ENCODE measurements at regions of chr6 and their contacts with region 1.

Region 1: GRCh38 chr6:27479319-27480182 is 6.6 kb upstream of the ZNF184 start:
- DNase-seq: peak; percentile 87 to 93 (median 92)
- H3K4me3 ChIP-seq: peak overlapping the region; percentile 88 to 93
- H3K4me3 Mint-ChIP-seq: no peak overlapping the region
- H3K27ac ChIP-seq: peak overlapping the region; percentile 85
- H3K27ac Mint-ChIP-seq: no peak overlapping the region
- H3K4me1 ChIP-seq: peaks cover 17% of the 10 kb centered on the region
- H3K4me1 Mint-ChIP-seq: peaks cover 0 to 11% (median 5%) of the 10 kb centered on the region in 4 donors
- H3K27me3 ChIP-seq: no peaks in the 10 kb centered on the region
- H3K27me3 Mint-ChIP-seq: no peaks in the 10 kb centered on the region

Region 2: DNA sequence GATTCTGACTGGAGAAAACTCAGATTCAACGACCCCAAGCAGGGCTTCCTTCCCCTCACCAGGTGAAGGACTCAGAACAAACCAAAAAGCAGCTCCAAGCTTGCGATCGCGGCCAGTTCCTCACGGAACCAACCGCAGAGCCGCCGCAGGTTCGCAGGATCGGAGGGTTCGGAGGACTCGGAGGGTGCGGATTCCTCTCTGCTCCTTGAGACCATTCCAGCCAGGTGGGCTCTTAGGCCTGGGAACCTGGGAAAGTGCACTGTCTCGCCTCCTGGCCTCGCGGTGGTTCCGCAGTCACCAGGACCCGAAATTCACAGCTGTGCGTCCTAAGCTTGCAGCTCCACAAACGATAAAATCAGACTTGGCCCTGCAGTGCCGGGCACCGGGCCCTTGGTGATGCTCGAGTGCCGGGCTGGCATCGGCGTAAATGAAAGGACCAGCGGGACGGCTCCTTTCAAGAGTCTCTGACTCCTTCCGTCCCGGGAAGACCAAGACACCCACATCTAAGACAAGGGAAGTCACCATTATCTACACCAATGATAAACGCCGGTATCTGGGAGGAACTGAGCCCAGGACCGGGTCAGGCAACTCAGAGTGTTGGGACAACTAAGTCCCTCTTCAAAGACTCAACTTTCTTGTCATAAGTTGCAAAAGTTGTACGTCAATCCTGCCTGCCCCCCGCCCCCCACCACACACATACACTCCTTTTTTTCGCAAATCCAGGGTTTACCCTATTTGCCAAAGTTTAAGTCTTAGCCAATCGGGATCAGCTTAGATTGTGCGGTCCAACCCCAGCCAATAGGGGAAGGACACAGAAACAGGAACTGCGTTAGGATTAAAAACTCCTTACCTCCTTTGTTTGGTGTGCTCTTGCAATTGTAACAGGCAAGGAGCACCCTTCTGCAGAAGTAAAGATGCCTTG is 301.8 kb before region 1 on chr6:
- CTCF ChIA-PET with region 1: no interaction called
- POLR2A ChIA-PET with region 1: interaction called, 24 read pairs
- intact Hi-C with region 1: loop called (anchors 1 kb)
- DNase-seq: peak; percentile 68 to 80 (median 70)
- H3K4me3 ChIP-seq: peak overlapping the region; percentile 98
- H3K4me3 Mint-ChIP-seq: peak overlapping the region; percentile 95 to 99 (median 98)
- H3K27ac ChIP-seq: peak overlapping the region; percentile 77
- H3K27ac Mint-ChIP-seq: peak overlapping the region; percentile 86 to 100 (median 93)
- H3K4me1 ChIP-seq: peaks cover 7% of the 10 kb centered on the region
- H3K4me1 Mint-ChIP-seq: peaks cover 5 to 29% (median 13%) of the 10 kb centered on the region in 4 donors
- H3K27me3 ChIP-seq: no peaks in the 10 kb centered on the region
- H3K27me3 Mint-ChIP-seq: peaks cover 3 to 4% of the 10 kb centered on the region in 2 donors

Region 3: GRCh38 chr6:27388293-27389197 is 91.0 kb before region 1 on chr6 and contains the start of gene ZNF391:
- CTCF ChIA-PET with region 1: interaction called, 3 read pairs
- POLR2A ChIA-PET with region 1: interaction called, 18 read pairs
- intact Hi-C with region 1: loop called (anchors 2 kb)
- DNase-seq: peak; percentile 50 to 71 (median 62)
- H3K4me3 ChIP-seq: peak within 1 kb of the TSS; percentile 62 to 95
- H3K4me3 Mint-ChIP-seq: peak within 1 kb of the TSS; percentile 94 to 99 (median 97)
- H3K27ac ChIP-seq: peak within 1 kb of the TSS; percentile 43
- H3K27ac Mint-ChIP-seq: peak within 1 kb of the TSS; percentile 74 to 95 (median 91)
- H3K4me1 ChIP-seq: peaks cover 14% of the 10 kb centered on the region
- H3K4me1 Mint-ChIP-seq: peaks cover 7 to 23% (median 16%) of the 10 kb centered on the region in 4 donors
- H3K27me3 ChIP-seq: no peaks in the 10 kb centered on the region
- H3K27me3 Mint-ChIP-seq: peaks cover 0 to 1% of the 10 kb centered on the region in 2 donors
- total RNA-seq, gene ZNF391: 3.3 to 3.7 TPM

Region 4: GRCh38 chr6:27518881-27519795 is 39.6 kb after region 1 on chr6:
- CTCF ChIA-PET with region 1: interaction called, 16 read pairs
- POLR2A ChIA-PET with region 1: interaction called, 19 read pairs
- intact Hi-C with region 1: loop called (anchors 1 kb)
- DNase-seq: peak; percentile 63 to 72 (median 68)
- H3K4me3 ChIP-seq: peak overlapping the region; percentile 66 to 76
- H3K4me3 Mint-ChIP-seq: peak overlapping the region; percentile 87 to 93 (median 89)
- H3K27ac ChIP-seq: peak overlapping the region; percentile 64
- H3K27ac Mint-ChIP-seq: peak overlapping the region; percentile 51 to 91 (median 88)
- H3K4me1 ChIP-seq: peaks cover 9% of the 10 kb centered on the region
- H3K4me1 Mint-ChIP-seq: peaks cover 12 to 31% (median 18%) of the 10 kb centered on the region in 4 donors
- H3K27me3 ChIP-seq: no peaks in the 10 kb centered on the region
- H3K27me3 Mint-ChIP-seq: peaks cover 9 to 20% of the 10 kb centered on the region in 2 donors

Region 5: GRCh38 chr6:27795697-27796494 is 316.3 kb after region 1 on chr6:
- CTCF ChIA-PET with region 1: interaction called, 4 read pairs
- POLR2A ChIA-PET with region 1: no interaction called
- intact Hi-C with region 1: loop called (anchors 2 kb)
- DNase-seq: peak; percentile 75 to 82 (median 80)
- H3K4me3 ChIP-seq: no peak overlapping the region
- H3K4me3 Mint-ChIP-seq: peak overlapping the region in 1 of 8 donors; percentile 16
- H3K27ac ChIP-seq: no peak overlapping the region
- H3K27ac Mint-ChIP-seq: peak overlapping the region in 5 of 7 donors; percentile 6 to 91 (median 35)
- H3K4me1 ChIP-seq: peaks cover 21% of the 10 kb centered on the region
- H3K4me1 Mint-ChIP-seq: peaks cover 17 to 29% (median 21%) of the 10 kb centered on the region in 4 donors
- H3K27me3 ChIP-seq: peaks cover 6% of the 10 kb centered on the region
- H3K27me3 Mint-ChIP-seq: peaks cover 6 to 13% of the 10 kb centered on the region in 2 donors

Region 6: DNA sequence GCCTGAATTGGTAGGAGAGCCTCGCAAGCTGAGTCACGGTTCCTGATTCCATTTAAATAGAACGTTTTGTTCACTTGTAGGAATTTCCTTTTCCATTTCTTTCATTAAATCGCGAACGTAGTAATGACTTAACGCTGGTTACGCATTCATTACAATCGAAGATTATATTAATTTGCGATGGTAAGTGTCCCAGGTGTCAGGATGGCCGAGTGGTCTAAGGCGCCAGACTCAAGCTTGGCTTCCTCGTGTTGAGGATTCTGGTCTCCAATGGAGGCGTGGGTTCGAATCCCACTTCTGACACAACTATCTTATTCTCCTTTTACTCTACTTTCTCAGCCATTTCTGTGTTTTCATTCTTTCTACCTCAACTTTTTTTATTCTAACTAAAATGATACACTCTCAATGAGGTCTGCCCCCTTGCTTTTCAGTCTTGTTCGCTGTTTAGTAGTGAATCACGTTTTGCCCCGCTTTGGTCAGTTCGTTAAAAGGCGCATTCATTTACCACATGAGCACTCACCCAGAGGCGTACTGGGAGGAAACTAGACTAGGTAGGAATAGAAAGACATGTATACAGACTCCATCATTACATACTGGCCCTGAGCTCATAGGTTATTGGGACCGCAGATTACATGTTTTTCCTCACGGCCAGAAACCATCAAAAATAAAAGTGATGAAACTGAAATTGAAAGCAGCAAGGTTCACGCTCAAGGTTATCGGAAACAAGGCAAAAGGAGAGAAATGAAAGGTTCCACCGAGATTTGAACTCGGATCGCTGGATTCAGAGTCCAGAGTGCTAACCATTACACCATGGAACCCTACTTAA is 1461.5 kb after region 1 on chr6:
- CTCF ChIA-PET with region 1: no interaction called
- POLR2A ChIA-PET with region 1: no interaction called
- intact Hi-C with region 1: loop called (anchors 1 kb)
- DNase-seq: peak; percentile 85 to 88 (median 86)
- H3K4me3 ChIP-seq: peak overlapping the region; percentile 62 to 77
- H3K4me3 Mint-ChIP-seq: peak overlapping the region; percentile 87 to 98 (median 95)
- H3K27ac ChIP-seq: peak overlapping the region; percentile 39
- H3K27ac Mint-ChIP-seq: peak overlapping the region; percentile 85 to 97 (median 94)
- H3K4me1 ChIP-seq: peaks cover 35% of the 10 kb centered on the region
- H3K4me1 Mint-ChIP-seq: peaks cover 26 to 57% (median 46%) of the 10 kb centered on the region in 4 donors
- H3K27me3 ChIP-seq: no peaks in the 10 kb centered on the region
- H3K27me3 Mint-ChIP-seq: peaks cover 0 to 10% of the 10 kb centered on the region in 2 donors

Measured in CD4-positive, alpha-beta memory T cell (primary cell).